Common myeloid progenitor, CD34-positive (primary cell): ENCODE measurements at regions of chr7 and their contacts with region 1.

Region 1: DNA sequence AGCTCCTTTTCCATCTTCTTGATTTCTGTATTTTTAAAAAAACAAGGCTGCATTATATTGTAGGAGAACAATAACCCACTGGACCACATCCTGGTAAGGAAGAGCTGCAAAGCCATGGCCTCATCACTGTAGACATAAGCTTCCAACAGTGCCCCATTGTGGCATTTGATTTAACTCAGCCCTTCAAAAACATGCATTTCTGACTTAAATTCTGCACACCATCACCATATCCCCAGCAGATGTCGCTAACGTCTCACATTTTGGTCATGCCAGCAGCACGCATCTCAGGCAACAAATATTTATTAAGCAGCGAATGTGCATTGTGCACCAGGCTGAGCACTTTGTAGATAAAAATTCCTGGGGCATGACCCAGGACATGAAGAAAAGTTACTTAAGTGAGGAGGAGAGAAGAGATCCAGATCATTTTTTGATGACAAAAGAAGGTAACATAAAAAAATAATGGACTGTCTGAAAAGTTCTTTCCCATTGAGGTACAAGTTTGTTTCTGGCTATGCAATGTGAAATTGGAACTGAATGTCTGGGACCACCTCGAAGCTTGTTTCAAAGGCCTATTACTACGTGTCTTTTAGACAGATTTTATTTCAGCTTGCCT is 164.6 kb upstream of the CDCA7L start:
- DNase-seq: peak; percentile 87 to 93 (median 87)
- H3K4me3 ChIP-seq: no peak overlapping the region
- H3K27ac ChIP-seq: no peak overlapping the region
- H3K4me1 ChIP-seq: no peaks in the 10 kb centered on the region
- H3K27me3 ChIP-seq: peaks cover 0 to 4% (median 0%) of the 10 kb centered on the region in 5 experiments

Region 2: GRCh38 chr7:22016507-22016906 is 93.8 kb before region 1 on chr7:
- CTCF ChIA-PET with region 1: no interaction called
- POLR2A ChIA-PET with region 1: no interaction called
- DNase-seq: no peak
- H3K4me3 ChIP-seq: no peak overlapping the region
- H3K27ac ChIP-seq: no peak overlapping the region
- H3K4me1 ChIP-seq: no peaks in the 10 kb centered on the region
- H3K27me3 ChIP-seq: peaks cover 0 to 2% (median 0%) of the 10 kb centered on the region in 5 experiments

Region 3: GRCh38 chr7:22255834-22256233 is 145.5 kb after region 1 on chr7:
- CTCF ChIA-PET with region 1: interaction called, 20 read pairs
- POLR2A ChIA-PET with region 1: no interaction called
- DNase-seq: no peak
- H3K4me3 ChIP-seq: no peak overlapping the region
- H3K27ac ChIP-seq: no peak overlapping the region
- H3K4me1 ChIP-seq: no peaks in the 10 kb centered on the region
- H3K27me3 ChIP-seq: no peaks in the 10 kb centered on the region

Region 4: DNA sequence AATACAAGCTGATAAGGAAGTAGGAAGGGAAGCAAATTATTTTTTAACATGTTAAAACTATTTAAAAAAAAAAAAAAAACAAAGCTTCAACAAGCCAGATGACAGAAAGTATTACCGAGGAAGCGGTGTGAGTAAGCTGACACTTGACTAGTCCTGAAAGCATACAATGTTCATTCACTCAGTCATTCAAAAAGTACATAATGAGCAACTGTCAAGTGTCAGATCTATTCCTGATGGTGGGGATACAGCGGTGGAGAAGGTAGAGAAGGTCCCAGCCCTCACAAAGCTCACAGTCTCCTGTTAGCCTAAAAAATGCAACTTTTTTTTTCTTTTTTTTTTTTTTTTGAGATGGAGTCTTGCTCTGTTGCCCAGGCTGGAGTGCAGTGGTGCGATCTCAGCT is 206.6 kb after region 1 on chr7:
- CTCF ChIA-PET with region 1: no interaction called
- POLR2A ChIA-PET with region 1: no interaction called
- DNase-seq: no peak
- H3K4me3 ChIP-seq: no peak overlapping the region
- H3K27ac ChIP-seq: no peak overlapping the region
- H3K4me1 ChIP-seq: no peaks in the 10 kb centered on the region
- H3K27me3 ChIP-seq: no peaks in the 10 kb centered on the region

Region 5: DNA sequence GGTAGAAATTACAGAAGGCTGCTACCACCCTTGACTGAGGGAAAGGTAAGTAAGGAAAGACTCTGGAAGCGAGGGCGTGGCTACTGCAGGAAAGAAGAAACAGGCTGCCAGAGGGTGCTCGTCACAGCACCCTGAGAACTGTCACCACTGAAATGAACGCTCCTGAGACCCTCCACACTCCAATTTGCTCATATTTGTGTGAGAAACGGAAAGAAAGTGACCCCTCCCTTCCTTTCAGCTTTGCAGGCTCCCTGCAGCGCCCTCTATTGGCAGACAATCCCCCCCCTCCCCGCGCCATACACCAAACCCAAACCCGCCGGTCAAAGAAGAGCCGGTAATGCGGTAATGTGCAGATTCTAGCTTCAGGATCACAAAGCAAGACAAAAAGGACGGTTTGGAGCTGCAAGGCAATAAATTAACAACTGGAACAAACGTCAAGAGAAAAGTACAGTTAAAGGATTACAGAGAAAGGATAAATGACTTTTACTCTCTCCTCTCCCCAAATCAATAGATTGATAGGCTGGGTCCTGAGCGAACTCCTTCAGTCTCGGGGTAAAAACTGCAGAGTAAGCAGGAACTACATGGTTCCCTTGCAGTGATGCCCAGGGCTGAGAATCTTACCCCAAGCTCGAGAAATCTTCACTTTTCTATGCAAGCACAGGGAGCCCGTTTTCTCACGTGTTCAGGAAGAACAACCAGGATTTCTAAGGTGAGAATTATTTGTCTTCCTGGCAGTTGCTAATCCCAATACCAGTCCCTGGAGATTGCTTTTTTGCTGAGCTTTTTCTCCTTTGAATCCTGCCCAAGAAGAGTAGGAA is 342.0 kb after region 1 on chr7:
- CTCF ChIA-PET with region 1: interaction called, 19 read pairs
- POLR2A ChIA-PET with region 1: no interaction called
- DNase-seq: peak; percentile 49 to 69 (median 66)
- H3K4me3 ChIP-seq: peak overlapping the region in 4 of 7 experiments; percentile 20 to 52 (median 35)
- H3K27ac ChIP-seq: no peak overlapping the region
- H3K4me1 ChIP-seq: peaks cover 0 to 8% (median 4%) of the 10 kb centered on the region in 4 experiments
- H3K27me3 ChIP-seq: peaks cover 0 to 19% (median 5%) of the 10 kb centered on the region in 5 experiments

Region 6: GRCh38 chr7:22481726-22482125 is 371.4 kb after region 1 on chr7:
- CTCF ChIA-PET with region 1: interaction called, 78 read pairs
- POLR2A ChIA-PET with region 1: no interaction called
- DNase-seq: peak; percentile 27 to 84 (median 74)
- H3K4me3 ChIP-seq: peak overlapping the region in 1 of 7 experiments; percentile 8
- H3K27ac ChIP-seq: no peak overlapping the region
- H3K4me1 ChIP-seq: peaks cover 0 to 6% (median 5%) of the 10 kb centered on the region in 4 experiments
- H3K27me3 ChIP-seq: no peaks in the 10 kb centered on the region

Region 7: DNA sequence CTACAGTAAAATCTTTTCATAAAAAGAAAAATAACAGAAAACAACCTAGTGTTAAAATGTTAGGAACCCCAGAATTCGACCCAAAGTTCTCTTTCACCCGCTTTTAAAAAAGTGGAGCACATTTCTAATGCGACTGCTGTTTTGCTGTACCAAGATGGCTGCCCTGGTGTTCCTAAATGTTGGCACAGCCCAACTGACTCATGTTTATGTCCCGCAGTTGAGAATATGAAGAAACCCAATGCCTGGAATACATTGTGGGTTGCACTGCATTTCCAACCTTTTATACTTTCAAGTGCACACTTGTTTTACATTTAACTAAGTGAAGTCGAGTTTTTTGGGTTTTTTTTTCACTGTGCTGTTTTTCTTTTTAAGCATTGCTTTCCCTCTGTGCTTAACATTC is 388.7 kb after region 1 on chr7:
- CTCF ChIA-PET with region 1: interaction called, 23 read pairs
- POLR2A ChIA-PET with region 1: no interaction called
- DNase-seq: no peak
- H3K4me3 ChIP-seq: no peak overlapping the region
- H3K27ac ChIP-seq: no peak overlapping the region
- H3K4me1 ChIP-seq: peaks cover 0 to 7% (median 2%) of the 10 kb centered on the region in 4 experiments
- H3K27me3 ChIP-seq: peaks cover 0 to 4% (median 0%) of the 10 kb centered on the region in 5 experiments